Activated CD8-positive, alpha-beta T cell treated with anti-CD3 and anti-CD28 coated beads for 36 hours (primary cell): ENCODE measurements at regions of chr4 and their contacts with region 1.

Region 1: GRCh38 chr4:40316782-40317635 is 18.1 kb upstream of the CHRNA9 start:
- DNase-seq: peak; percentile 71
- ATAC-seq: peak; percentile 74
- H3K4me3 Mint-ChIP-seq: peak overlapping the region; percentile 81
- H3K27ac Mint-ChIP-seq: peak overlapping the region; percentile 99
- H3K4me1 Mint-ChIP-seq: peaks cover 62% of the 10 kb centered on the region
- H3K27me3 Mint-ChIP-seq: no peaks in the 10 kb centered on the region
- CTCF ChIP-seq: peak; percentile 90

Region 2: GRCh38 chr4:39889226-39889625 is 427.8 kb before region 1 on chr4:
- CTCF ChIA-PET with region 1: no interaction called
- POLR2A ChIA-PET with region 1: no interaction called
- intact Hi-C with region 1: no loop called
- DNase-seq: no peak
- ATAC-seq: no peak
- H3K4me3 Mint-ChIP-seq: no peak overlapping the region
- H3K27ac Mint-ChIP-seq: no peak overlapping the region
- H3K4me1 Mint-ChIP-seq: no peaks in the 10 kb centered on the region
- H3K27me3 Mint-ChIP-seq: no peaks in the 10 kb centered on the region
- CTCF ChIP-seq: no peak

Region 3: GRCh38 chr4:39950861-39951481 is 366.0 kb before region 1 on chr4:
- CTCF ChIA-PET with region 1: no interaction called
- POLR2A ChIA-PET with region 1: no interaction called
- intact Hi-C with region 1: no loop called
- DNase-seq: no peak
- ATAC-seq: no peak
- H3K4me3 Mint-ChIP-seq: no peak overlapping the region
- H3K27ac Mint-ChIP-seq: no peak overlapping the region
- H3K4me1 Mint-ChIP-seq: peaks cover 51% of the 10 kb centered on the region
- H3K27me3 Mint-ChIP-seq: no peaks in the 10 kb centered on the region
- CTCF ChIP-seq: no peak

Region 4: DNA sequence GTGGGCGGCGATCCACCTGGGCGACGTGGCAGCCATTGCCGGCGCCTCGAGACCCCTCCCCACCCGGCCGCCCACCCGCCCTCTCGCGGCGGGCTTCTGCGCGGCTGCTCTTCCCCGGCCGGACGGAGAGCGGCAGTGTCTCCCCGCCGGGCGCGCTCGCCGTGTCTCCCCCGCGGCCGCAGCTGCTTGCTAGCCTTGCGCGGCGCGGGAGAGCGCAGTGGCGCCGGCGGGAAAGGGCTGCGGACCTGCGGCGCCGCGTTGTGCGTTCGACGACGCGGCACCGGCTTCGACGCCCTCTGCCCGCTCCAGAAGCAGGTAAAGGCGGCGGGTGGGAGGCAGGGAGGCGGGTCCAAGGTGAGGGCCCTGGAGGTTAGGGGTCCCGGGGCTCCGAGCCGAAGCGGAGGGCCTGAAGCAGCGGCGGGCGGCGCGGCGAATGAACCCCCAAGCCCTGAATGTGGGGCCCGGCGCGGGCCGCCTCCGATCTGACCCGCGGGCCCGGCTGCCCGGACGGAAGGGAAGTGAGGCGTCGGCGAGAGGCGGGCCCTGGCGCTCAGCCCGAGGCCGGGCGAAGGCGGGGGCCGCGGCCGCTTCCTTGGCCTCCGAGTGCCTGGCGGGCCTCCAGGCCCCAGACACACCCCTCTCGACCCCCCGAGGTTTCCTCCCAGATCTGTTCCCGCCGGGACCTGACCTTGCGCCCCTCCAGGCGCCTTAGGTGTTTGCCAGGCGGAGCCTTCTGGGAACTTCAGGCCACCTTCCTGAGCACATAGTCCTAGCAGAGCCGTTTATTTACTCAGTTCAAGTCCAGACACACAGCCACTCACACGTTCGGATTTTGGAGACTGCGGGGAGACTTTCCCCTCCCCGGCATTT is 260.1 kb before region 1 on chr4 and contains the start of gene N4BP2:
- CTCF ChIA-PET with region 1: interaction called, 16 read pairs
- POLR2A ChIA-PET with region 1: interaction called, 17 read pairs
- intact Hi-C with region 1: no loop called
- DNase-seq: peak; percentile 77
- ATAC-seq: peak; percentile 59
- H3K4me3 Mint-ChIP-seq: peak within 1 kb of the TSS; percentile 96
- H3K27ac Mint-ChIP-seq: peak within 1 kb of the TSS; percentile 97
- H3K4me1 Mint-ChIP-seq: peaks cover 32% of the 10 kb centered on the region
- H3K27me3 Mint-ChIP-seq: peaks cover 6% of the 10 kb centered on the region
- CTCF ChIP-seq: peak; percentile 75
- total RNA-seq, gene N4BP2: 17.4 to 17.5 TPM

Region 5: GRCh38 chr4:40193016-40193571 is 123.9 kb before region 1 on chr4:
- CTCF ChIA-PET with region 1: interaction called, 40 read pairs
- POLR2A ChIA-PET with region 1: interaction called, 326 read pairs
- intact Hi-C with region 1: no loop called
- DNase-seq: peak; percentile 50
- ATAC-seq: peak; percentile 13
- H3K4me3 Mint-ChIP-seq: peak overlapping the region; percentile 99
- H3K27ac Mint-ChIP-seq: peak overlapping the region; percentile 99
- H3K4me1 Mint-ChIP-seq: peaks cover 57% of the 10 kb centered on the region
- H3K27me3 Mint-ChIP-seq: no peaks in the 10 kb centered on the region
- CTCF ChIP-seq: no peak

Region 6: GRCh38 chr4:40205259-40206198 is 111.5 kb before region 1 on chr4:
- CTCF ChIA-PET with region 1: interaction called, 40 read pairs
- POLR2A ChIA-PET with region 1: interaction called, 326 read pairs
- intact Hi-C with region 1: no loop called
- DNase-seq: peak; percentile 65
- ATAC-seq: peak; percentile 52
- H3K4me3 Mint-ChIP-seq: peak overlapping the region; percentile 99
- H3K27ac Mint-ChIP-seq: peak overlapping the region; percentile 99
- H3K4me1 Mint-ChIP-seq: peaks cover 35% of the 10 kb centered on the region
- H3K27me3 Mint-ChIP-seq: no peaks in the 10 kb centered on the region
- CTCF ChIP-seq: no peak

Region 7: GRCh38 chr4:40238700-40239548 is 78.1 kb before region 1 on chr4:
- CTCF ChIA-PET with region 1: interaction called, 22 read pairs
- POLR2A ChIA-PET with region 1: interaction called, 14 read pairs
- intact Hi-C with region 1: no loop called
- DNase-seq: peak; percentile 93
- ATAC-seq: peak; percentile 90
- H3K4me3 Mint-ChIP-seq: peak overlapping the region; percentile 81
- H3K27ac Mint-ChIP-seq: peak overlapping the region; percentile 96
- H3K4me1 Mint-ChIP-seq: peaks cover 82% of the 10 kb centered on the region
- H3K27me3 Mint-ChIP-seq: no peaks in the 10 kb centered on the region
- CTCF ChIP-seq: no peak

Region 8: GRCh38 chr4:40283968-40284367 is 33.0 kb before region 1 on chr4:
- CTCF ChIA-PET with region 1: interaction called, 10 read pairs
- POLR2A ChIA-PET with region 1: interaction called, 5 read pairs
- intact Hi-C with region 1: no loop called
- DNase-seq: peak; percentile 95
- ATAC-seq: peak; percentile 89
- H3K4me3 Mint-ChIP-seq: peak overlapping the region; percentile 45
- H3K27ac Mint-ChIP-seq: peak overlapping the region; percentile 98
- H3K4me1 Mint-ChIP-seq: peaks cover 64% of the 10 kb centered on the region
- H3K27me3 Mint-ChIP-seq: no peaks in the 10 kb centered on the region
- CTCF ChIP-seq: peak; percentile 65